WTC11 (cell line): ENCODE measurements at regions of chr19 and their contacts with region 1.

Region 1: GRCh38 chr19:14073261-14073924 is 807 bp downstream of the MISP3 start:
- DNase-seq: peak; percentile 71
- ATAC-seq: peak; percentile 32
- H3K4me3 Mint-ChIP-seq: peak overlapping the region; percentile 84
- H3K27ac Mint-ChIP-seq: no peak overlapping the region
- H3K4me1 Mint-ChIP-seq: peaks cover 8% of the 10 kb centered on the region; the same call in 1 of the 2 replicates
- H3K27me3 Mint-ChIP-seq: peaks cover 70% of the 10 kb centered on the region
- CTCF ChIP-seq: peak; percentile 26; the same call in 1 of the 2 replicates

Region 2: DNA sequence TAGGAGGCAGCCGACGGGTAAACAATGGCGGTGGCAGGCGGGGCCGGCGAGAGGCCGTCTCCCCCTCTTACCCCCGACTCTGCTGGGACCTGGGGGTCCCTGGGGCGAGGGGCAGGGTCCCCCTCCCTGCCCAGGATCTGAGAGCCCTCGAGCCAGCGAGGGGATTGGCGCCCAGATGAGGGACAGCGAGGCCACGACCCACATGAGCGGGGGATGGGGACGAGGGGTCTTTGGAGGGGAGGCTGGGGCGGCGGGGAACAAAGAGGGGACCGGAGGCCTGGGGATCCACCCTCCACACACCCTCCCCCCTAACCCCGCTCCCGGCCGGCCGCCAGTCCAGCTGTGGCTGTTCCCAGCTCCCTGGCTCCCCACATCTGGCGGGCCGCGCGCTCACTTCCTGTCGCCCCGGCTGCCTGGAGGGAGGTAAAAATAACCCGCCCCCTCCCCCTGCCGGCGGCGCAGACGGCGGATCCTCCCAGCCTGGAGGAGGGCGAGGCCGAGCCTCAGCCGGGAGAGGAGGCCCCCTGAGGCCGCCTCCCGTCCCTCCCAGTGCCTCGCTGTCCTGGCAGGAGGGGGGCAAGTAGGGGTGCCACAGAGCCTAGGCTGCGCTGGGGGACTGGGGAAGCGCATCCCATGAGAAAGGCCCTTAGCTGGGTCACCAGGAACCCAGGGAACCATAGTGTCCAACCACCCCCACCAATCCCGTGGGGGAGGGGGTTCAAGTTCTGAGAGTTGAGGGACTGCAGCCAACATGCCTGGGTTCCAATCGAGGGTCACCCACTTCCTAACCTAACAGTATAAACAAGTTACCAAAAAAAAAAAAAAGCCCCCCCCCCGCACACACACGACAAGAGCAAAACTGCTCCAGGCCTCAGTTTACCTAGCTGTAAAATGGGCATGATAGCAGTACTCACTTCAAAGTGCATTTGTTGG is 225.7 kb before region 1 on chr19:
- CTCF ChIA-PET with region 1: no interaction called
- POLR2A ChIA-PET with region 1: no interaction called
- DNase-seq: peak; percentile 88
- ATAC-seq: peak; percentile 35
- H3K4me3 Mint-ChIP-seq: peak overlapping the region; percentile 64
- H3K27ac Mint-ChIP-seq: no peak overlapping the region
- H3K4me1 Mint-ChIP-seq: peaks cover 40% of the 10 kb centered on the region
- H3K27me3 Mint-ChIP-seq: no peaks in the 10 kb centered on the region; the same call in 1 of the 2 replicates
- CTCF ChIP-seq: no peak

Region 3: GRCh38 chr19:13880059-13881043 is 193.0 kb before region 1 on chr19:
- CTCF ChIA-PET with region 1: interaction called, 41 read pairs
- POLR2A ChIA-PET with region 1: interaction called, 3 read pairs
- DNase-seq: peak; percentile 98
- ATAC-seq: peak; percentile 83
- H3K4me3 Mint-ChIP-seq: peak overlapping the region; percentile 41
- H3K27ac Mint-ChIP-seq: peak overlapping the region; percentile 82
- H3K4me1 Mint-ChIP-seq: peaks cover 26% of the 10 kb centered on the region
- H3K27me3 Mint-ChIP-seq: peaks cover 36% of the 10 kb centered on the region
- CTCF ChIP-seq: peak; percentile 88

Region 4: DNA sequence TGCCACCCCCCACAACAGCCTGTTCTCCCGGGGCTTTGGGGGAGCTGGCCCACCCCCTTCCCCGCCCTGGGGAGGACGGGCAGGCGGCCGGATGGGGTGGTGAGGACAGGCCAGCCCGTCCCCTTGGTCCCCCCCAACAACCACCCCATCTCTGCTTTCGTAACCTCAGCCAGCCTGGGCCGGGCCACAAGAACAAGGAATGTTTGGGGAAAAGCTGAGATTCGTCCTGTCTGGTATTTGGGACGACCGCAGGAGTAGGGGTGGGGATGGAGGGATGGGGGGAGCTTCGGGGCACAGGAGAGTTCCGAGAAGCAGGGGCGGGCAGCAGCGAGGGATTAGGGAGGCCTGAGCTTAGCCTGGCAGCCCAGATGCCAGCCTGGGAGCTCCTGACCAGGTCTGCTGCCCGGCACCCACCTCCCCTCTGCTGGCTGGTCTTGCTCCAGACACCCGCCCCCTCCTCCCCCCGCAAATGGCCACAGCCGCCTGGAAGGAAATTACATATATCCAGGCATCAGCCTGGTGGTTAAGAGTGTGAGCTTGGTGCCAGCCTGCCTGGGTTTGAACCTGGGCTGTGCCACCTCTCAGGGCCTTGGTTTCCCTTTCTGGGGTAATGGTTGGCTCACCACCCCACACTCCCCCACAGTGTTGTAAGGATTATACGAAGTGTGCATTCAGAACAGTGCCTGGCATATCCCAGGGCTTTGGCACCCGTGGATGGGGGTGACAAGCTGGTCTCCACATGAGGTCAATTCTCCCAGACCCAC is 134.9 kb before region 1 on chr19 and contains the start of gene PODNL1:
- CTCF ChIA-PET with region 1: interaction called, 11 read pairs
- POLR2A ChIA-PET with region 1: interaction called, 3 read pairs
- DNase-seq: no peak
- ATAC-seq: no peak
- H3K4me3 Mint-ChIP-seq: peak within 1 kb of the TSS; percentile 29; the same call in 1 of the 2 replicates
- H3K27ac Mint-ChIP-seq: no peak within 1 kb of the TSS
- H3K4me1 Mint-ChIP-seq: peaks cover 29% of the 10 kb centered on the region
- H3K27me3 Mint-ChIP-seq: no peaks in the 10 kb centered on the region; the same call in 1 of the 2 replicates
- CTCF ChIP-seq: no peak
- total RNA-seq, gene PODNL1: 1.1 to 1.4 TPM (median 1.4 TPM) in 3 replicates

Region 5: GRCh38 chr19:13959962-13960862 is 113.2 kb before region 1 on chr19:
- CTCF ChIA-PET with region 1: interaction called, 16 read pairs
- POLR2A ChIA-PET with region 1: no interaction called
- DNase-seq: peak; percentile 61
- ATAC-seq: peak; percentile 9
- H3K4me3 Mint-ChIP-seq: no peak overlapping the region
- H3K27ac Mint-ChIP-seq: peak overlapping the region; percentile 87
- H3K4me1 Mint-ChIP-seq: peaks cover 6% of the 10 kb centered on the region
- H3K27me3 Mint-ChIP-seq: peaks cover 3% of the 10 kb centered on the region
- CTCF ChIP-seq: peak; percentile 8; the same call in 1 of the 2 replicates

Region 6: DNA sequence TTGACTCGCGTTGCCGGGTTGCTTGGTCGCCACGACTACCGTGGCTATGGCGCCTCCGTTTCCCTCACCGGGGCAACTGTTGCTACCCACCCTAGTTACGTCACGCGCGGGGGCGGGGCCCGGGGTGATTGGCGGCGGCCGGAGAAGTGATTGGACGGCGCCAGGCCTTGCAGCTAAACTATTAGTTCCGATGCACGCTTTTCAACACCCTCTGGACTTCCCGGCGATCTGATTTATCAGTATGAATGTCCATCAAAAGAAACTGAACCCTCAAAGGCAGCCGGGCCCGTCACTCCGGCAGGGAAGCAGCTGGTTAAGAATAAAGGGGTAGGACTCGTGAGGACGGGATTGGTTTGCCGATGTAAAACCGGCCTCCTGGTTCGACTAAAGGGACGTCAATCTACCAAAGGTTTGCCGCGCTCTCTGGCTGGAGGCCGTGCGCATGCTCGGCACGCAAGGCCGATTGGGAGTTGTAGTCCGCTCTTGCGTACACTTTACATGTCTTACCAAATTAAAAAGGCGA is 67.1 kb before region 1 on chr19 and contains the start of gene RFX1:
- CTCF ChIA-PET with region 1: interaction called, 10 read pairs
- POLR2A ChIA-PET with region 1: no interaction called
- DNase-seq: peak; percentile 100
- ATAC-seq: peak; percentile 85
- H3K4me3 Mint-ChIP-seq: peak within 1 kb of the TSS; percentile 92
- H3K27ac Mint-ChIP-seq: peak within 1 kb of the TSS; percentile 100
- H3K4me1 Mint-ChIP-seq: peaks cover 19% of the 10 kb centered on the region
- H3K27me3 Mint-ChIP-seq: peaks cover 4% of the 10 kb centered on the region
- CTCF ChIP-seq: no peak
- total RNA-seq, gene RFX1: 20.4 to 23.2 TPM (median 21.4 TPM) in 3 replicates

Region 7: GRCh38 chr19:14048443-14049153 is 24.8 kb before region 1 on chr19:
- CTCF ChIA-PET with region 1: interaction called, 23 read pairs
- POLR2A ChIA-PET with region 1: no interaction called
- DNase-seq: peak; percentile 92
- ATAC-seq: peak; percentile 98
- H3K4me3 Mint-ChIP-seq: no peak overlapping the region
- H3K27ac Mint-ChIP-seq: no peak overlapping the region
- H3K4me1 Mint-ChIP-seq: no peaks in the 10 kb centered on the region
- H3K27me3 Mint-ChIP-seq: no peaks in the 10 kb centered on the region
- CTCF ChIP-seq: peak; percentile 89

Region 8: GRCh38 chr19:14091081-14091812 is 17.9 kb after region 1 on chr19:
- CTCF ChIA-PET with region 1: interaction called, 11 read pairs
- POLR2A ChIA-PET with region 1: interaction called, 3 read pairs
- DNase-seq: peak; percentile 35
- ATAC-seq: peak; percentile 40
- H3K4me3 Mint-ChIP-seq: peak overlapping the region; percentile 95
- H3K27ac Mint-ChIP-seq: peak overlapping the region; percentile 94; the same call in 1 of the 2 replicates
- H3K4me1 Mint-ChIP-seq: peaks cover 13% of the 10 kb centered on the region
- H3K27me3 Mint-ChIP-seq: peaks cover 30% of the 10 kb centered on the region
- CTCF ChIP-seq: no peak